Testis (tissue), 5 donors: ENCODE measurements at regions of chr15 and their contacts with region 1.

Region 1: DNA sequence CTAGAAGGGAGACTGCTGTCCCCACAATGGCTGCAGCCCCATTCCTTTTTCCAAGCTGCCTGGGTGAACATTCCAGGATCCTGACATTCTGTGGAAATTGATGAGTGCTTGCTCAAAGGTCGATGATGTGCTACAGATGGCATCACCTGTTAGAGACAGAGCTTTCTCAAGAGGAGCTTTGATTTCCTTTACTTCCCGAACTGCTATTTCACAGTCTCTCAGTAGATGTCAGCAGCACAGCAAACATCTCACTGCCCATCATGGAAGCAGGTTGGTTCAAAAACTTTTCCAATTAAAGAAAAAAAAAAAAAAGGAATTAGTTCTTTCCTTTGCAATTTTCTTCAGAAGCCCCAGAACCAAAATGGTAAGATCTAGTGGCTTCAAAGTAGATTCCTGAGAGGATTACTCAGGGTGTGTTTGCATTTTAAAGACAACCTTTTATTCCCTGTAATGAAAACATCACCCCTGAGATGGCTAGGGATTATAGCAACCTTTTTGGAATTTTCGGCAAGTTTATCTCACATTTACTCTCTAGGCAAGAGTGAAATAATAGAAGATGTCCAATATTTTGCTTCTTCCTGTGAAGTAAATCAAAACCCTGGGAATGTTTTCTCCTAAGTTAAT is 44.8 kb downstream of the POLR2M start:
- DNase-seq: no peak
- H3K4me3 ChIP-seq: no peak overlapping the region
- H3K27ac ChIP-seq: no peak overlapping the region
- H3K4me1 ChIP-seq: no peaks in the 10 kb centered on the region
- H3K27me3 ChIP-seq: no peaks in the 10 kb centered on the region
- CTCF ChIP-seq: peak; percentile 26 to 58 (median 47)
- POLR2A ChIP-seq: no peak

Region 2: DNA sequence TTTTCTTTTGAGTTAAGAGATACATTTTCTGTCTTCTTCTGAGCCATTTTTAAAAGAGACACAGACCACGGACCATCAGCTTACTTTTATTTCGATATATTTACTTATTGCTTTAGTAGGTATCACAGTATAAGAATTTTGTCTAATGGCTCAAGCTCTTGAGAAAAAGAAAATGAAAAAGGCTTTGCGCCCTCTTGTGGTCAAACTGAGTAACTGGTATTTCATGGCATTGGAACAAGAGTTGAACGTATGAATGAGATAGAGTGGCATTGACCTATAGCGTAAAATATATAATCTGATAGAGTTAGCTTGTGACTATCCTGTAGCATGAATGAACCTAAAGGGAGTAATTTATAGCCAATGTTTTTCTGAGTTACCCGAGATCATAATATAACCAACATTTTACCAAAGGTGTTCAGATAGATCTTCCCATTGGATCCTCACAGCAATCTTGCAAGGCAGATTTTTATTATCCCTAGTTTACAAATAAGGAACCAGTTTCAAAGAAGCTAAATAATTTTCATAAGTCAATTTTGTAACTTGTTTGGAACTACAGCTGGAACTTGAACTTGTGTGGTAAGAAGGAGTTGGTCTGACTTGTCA is 109.8 kb after region 1 on chr15:
- intact Hi-C with region 1: loop called (anchors 10 kb)
- DNase-seq: peak; percentile 38
- H3K4me3 ChIP-seq: no peak overlapping the region
- H3K27ac ChIP-seq: no peak overlapping the region
- H3K4me1 ChIP-seq: no peaks in the 10 kb centered on the region
- H3K27me3 ChIP-seq: no peaks in the 10 kb centered on the region
- CTCF ChIP-seq: peak; percentile 78 to 94 (median 81)
- POLR2A ChIP-seq: no peak

Region 3: DNA sequence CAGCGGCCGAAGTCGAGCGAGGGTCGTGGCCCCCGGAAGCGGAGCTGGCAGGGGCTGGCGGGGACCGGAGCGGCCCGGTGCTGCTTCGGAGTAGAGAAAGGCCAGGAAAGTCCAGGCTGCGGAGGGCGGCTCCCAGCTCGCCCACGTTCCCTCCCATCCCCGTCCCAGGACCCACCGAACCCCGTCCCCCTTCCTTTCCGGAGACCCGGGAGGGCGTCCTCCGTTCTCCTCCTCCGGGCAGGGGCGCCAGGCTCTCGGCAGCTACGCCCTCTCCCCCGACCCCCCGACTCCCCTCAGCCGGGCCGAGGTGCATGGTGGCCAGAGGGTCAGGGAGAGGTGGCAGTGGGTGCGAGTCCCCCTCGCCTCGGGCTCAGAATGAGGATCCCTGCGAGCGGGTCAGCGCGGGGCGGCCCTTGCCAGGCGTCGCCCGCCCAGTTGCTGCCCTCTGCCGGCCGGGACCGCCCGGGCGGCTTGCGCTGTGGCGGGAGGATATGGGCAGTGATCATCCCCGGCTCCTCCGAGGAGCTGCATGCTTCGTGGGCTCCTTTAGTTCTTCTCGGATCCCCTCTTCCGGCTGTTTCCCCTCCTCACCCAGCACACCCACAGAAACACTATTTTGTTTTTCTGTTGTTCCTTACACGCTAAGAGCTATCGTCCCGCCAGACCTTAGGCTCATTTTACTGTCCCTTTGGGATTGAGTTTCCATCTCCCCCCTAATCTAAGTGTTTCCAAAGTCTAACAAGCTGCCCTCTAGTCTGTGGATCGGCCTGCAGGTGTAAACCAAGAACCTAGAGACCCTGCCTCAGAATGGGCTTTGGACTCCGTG is 315.0 kb after region 1 on chr15:
- intact Hi-C with region 1: loop called (anchors 10 kb)
- DNase-seq: peak; percentile 73
- H3K4me3 ChIP-seq: peak overlapping the region; percentile 59 to 70
- H3K27ac ChIP-seq: peak overlapping the region; percentile 69 to 73
- H3K4me1 ChIP-seq: no peaks in the 10 kb centered on the region
- H3K27me3 ChIP-seq: no peaks in the 10 kb centered on the region
- CTCF ChIP-seq: peak; percentile 64 to 76 (median 76)
- POLR2A ChIP-seq: no peak